ENCODE measurements at regions of chr17 and their contacts with region 1.

Region 1: GRCh38 chr17:49997791-49998703 is 3.0 kb upstream of the DLX3 start:
- DNase-seq: peak; percentile 66 to 92 (median 83)
- ATAC-seq: peak; percentile 78
- H3K4me3 ChIP-seq: no peak overlapping the region
- H3K4me3 Mint-ChIP-seq: no peak overlapping the region
- H3K27ac ChIP-seq: no peak overlapping the region
- H3K27ac Mint-ChIP-seq: no peak overlapping the region
- H3K4me1 ChIP-seq: peaks cover 31% of the 10 kb centered on the region
- H3K4me1 Mint-ChIP-seq: peaks cover 33% of the 10 kb centered on the region
- H3K27me3 ChIP-seq: peaks cover 38 to 53% of the 10 kb centered on the region in 2 experiments
- H3K27me3 Mint-ChIP-seq: peaks cover 77% of the 10 kb centered on the region
- CTCF ChIP-seq: peak; percentile 85

Region 2: DNA sequence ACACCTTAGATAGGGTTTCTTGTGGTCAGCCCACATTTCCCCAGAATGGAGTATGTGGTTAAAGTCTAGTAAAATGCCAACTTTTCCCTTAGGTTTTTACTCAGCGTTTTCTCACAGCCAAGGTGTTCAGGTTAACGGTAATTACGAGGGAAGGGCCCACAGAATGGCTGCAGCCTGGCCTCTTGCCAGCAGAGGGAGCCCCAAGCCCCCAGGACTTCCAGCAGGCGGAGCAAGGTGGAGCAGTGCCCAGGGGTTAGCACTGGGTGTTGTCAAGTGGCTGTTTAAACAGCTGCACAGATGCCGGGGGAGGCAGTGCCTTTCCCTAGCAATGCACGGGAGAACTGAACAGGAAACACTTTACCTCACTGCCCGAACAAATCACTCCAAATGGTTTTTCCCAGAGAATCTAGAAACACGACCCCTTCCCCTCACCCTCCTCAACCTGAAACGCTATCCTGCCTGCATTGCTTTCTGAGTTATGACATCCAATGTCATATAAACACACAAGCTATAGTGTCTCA is 590.0 kb before region 1 on chr17:
- CTCF ChIA-PET with region 1: no interaction called
- POLR2A ChIA-PET with region 1: no interaction called
- intact Hi-C with region 1: loop called in 1 of 2 experiments (anchors 5 kb)
- DNase-seq: peak; percentile 76 to 90 (median 85)
- ATAC-seq: peak; percentile 97
- H3K4me3 ChIP-seq: no peak overlapping the region
- H3K4me3 Mint-ChIP-seq: no peak overlapping the region
- H3K27ac ChIP-seq: peak overlapping the region in 1 of 2 experiments; percentile 1
- H3K27ac Mint-ChIP-seq: peak overlapping the region; percentile 17
- H3K4me1 ChIP-seq: peaks cover 27% of the 10 kb centered on the region
- H3K4me1 Mint-ChIP-seq: peaks cover 36% of the 10 kb centered on the region
- H3K27me3 ChIP-seq: no peaks in the 10 kb centered on the region
- H3K27me3 Mint-ChIP-seq: no peaks in the 10 kb centered on the region
- CTCF ChIP-seq: peak; percentile 94

Region 3: GRCh38 chr17:49707608-49708514 is 290.2 kb before region 1 on chr17 and contains the start of gene SLC35B1:
- CTCF ChIA-PET with region 1: interaction called, 3 read pairs
- POLR2A ChIA-PET with region 1: no interaction called
- intact Hi-C with region 1: loop called in 1 of 2 experiments (anchors 2 kb)
- DNase-seq: peak; percentile 96 to 100 (median 98)
- ATAC-seq: peak; percentile 97
- H3K4me3 ChIP-seq: peak within 1 kb of the TSS; percentile 87 to 93
- H3K4me3 Mint-ChIP-seq: peak within 1 kb of the TSS; percentile 93
- H3K27ac ChIP-seq: peak within 1 kb of the TSS; percentile 95 to 97
- H3K27ac Mint-ChIP-seq: peak within 1 kb of the TSS; percentile 98
- H3K4me1 ChIP-seq: peaks cover 21% of the 10 kb centered on the region
- H3K4me1 Mint-ChIP-seq: peaks cover 42% of the 10 kb centered on the region
- H3K27me3 ChIP-seq: no peaks in the 10 kb centered on the region
- H3K27me3 Mint-ChIP-seq: no peaks in the 10 kb centered on the region
- CTCF ChIP-seq: peak; percentile 80
- total RNA-seq, gene SLC35B1: 57.7 to 64.2 TPM

Region 4: GRCh38 chr17:49880291-49881053 is 117.6 kb before region 1 on chr17:
- CTCF ChIA-PET with region 1: interaction called, 102 read pairs
- POLR2A ChIA-PET with region 1: interaction called, 6 read pairs
- intact Hi-C with region 1: loop called (anchors 1 kb)
- DNase-seq: peak; percentile 55 to 82 (median 72)
- ATAC-seq: peak; percentile 98
- H3K4me3 ChIP-seq: peak overlapping the region in 1 of 2 experiments; percentile 17
- H3K4me3 Mint-ChIP-seq: peak overlapping the region; percentile 15
- H3K27ac ChIP-seq: no peak overlapping the region
- H3K27ac Mint-ChIP-seq: no peak overlapping the region
- H3K4me1 ChIP-seq: peaks cover 8% of the 10 kb centered on the region
- H3K4me1 Mint-ChIP-seq: peaks cover 7% of the 10 kb centered on the region
- H3K27me3 ChIP-seq: peaks cover 12 to 17% of the 10 kb centered on the region in 2 experiments
- H3K27me3 Mint-ChIP-seq: peaks cover 35% of the 10 kb centered on the region
- CTCF ChIP-seq: peak; percentile 94

Region 5: GRCh38 chr17:49926886-49927285 is 71.2 kb before region 1 on chr17:
- CTCF ChIA-PET with region 1: interaction called, 18 read pairs
- POLR2A ChIA-PET with region 1: no interaction called
- intact Hi-C with region 1: no loop called
- DNase-seq: no peak
- ATAC-seq: no peak
- H3K4me3 ChIP-seq: no peak overlapping the region
- H3K4me3 Mint-ChIP-seq: no peak overlapping the region
- H3K27ac ChIP-seq: no peak overlapping the region
- H3K27ac Mint-ChIP-seq: no peak overlapping the region
- H3K4me1 ChIP-seq: no peaks in the 10 kb centered on the region
- H3K4me1 Mint-ChIP-seq: no peaks in the 10 kb centered on the region
- H3K27me3 ChIP-seq: no peaks in the 10 kb centered on the region
- H3K27me3 Mint-ChIP-seq: peaks cover 27% of the 10 kb centered on the region
- CTCF ChIP-seq: no peak

Region 6: GRCh38 chr17:49959183-49959935 is 38.7 kb before region 1 on chr17:
- CTCF ChIA-PET with region 1: interaction called, 255 read pairs
- POLR2A ChIA-PET with region 1: no interaction called
- intact Hi-C with region 1: no loop called
- DNase-seq: no peak
- ATAC-seq: no peak
- H3K4me3 ChIP-seq: no peak overlapping the region
- H3K4me3 Mint-ChIP-seq: no peak overlapping the region
- H3K27ac ChIP-seq: no peak overlapping the region
- H3K27ac Mint-ChIP-seq: no peak overlapping the region
- H3K4me1 ChIP-seq: peaks cover 8% of the 10 kb centered on the region
- H3K4me1 Mint-ChIP-seq: peaks cover 9% of the 10 kb centered on the region
- H3K27me3 ChIP-seq: peaks cover 15 to 20% of the 10 kb centered on the region in 2 experiments
- H3K27me3 Mint-ChIP-seq: peaks cover 33% of the 10 kb centered on the region
- CTCF ChIP-seq: no peak

Region 7: DNA sequence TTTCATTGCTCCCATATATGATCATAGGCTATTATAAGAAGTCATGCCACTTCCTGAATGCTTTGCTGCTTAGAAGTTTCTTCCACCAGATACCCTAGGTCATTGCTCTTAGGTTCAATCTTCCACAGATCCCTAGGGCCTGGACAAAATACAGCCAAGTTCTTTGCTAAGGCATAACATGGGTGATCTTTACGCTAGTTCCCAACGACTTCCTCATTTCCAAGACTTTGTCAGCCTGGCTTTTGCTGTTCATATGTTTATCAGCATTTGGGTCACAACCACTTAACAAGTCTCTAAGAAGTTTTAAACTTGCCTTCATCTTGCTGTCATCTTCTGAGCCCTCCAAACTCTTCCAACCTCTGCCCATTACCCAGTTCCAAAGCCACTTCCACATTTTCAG is 17.1 kb after region 1 on chr17:
- CTCF ChIA-PET with region 1: interaction called, 24 read pairs
- POLR2A ChIA-PET with region 1: no interaction called
- intact Hi-C with region 1: no loop called
- DNase-seq: no peak
- ATAC-seq: no peak
- H3K4me3 ChIP-seq: no peak overlapping the region
- H3K4me3 Mint-ChIP-seq: no peak overlapping the region
- H3K27ac ChIP-seq: no peak overlapping the region
- H3K27ac Mint-ChIP-seq: no peak overlapping the region
- H3K4me1 ChIP-seq: no peaks in the 10 kb centered on the region
- H3K4me1 Mint-ChIP-seq: no peaks in the 10 kb centered on the region
- H3K27me3 ChIP-seq: peaks cover 0 to 4% of the 10 kb centered on the region in 2 experiments
- H3K27me3 Mint-ChIP-seq: peaks cover 33% of the 10 kb centered on the region
- CTCF ChIP-seq: no peak